Naive thymus-derived CD4-positive, alpha-beta T cell (primary cell): ENCODE measurements at regions of chr10 and their contacts with region 1.

Region 1: GRCh38 chr10:101214446-101215396 is 14.5 kb downstream of the LBX1 start:
- DNase-seq: peak; percentile 42 to 77 (median 67)
- ATAC-seq: peak; percentile 86
- H3K4me3 ChIP-seq: no peak overlapping the region
- H3K4me3 Mint-ChIP-seq: peak overlapping the region; percentile 48 to 90 (median 80)
- H3K27ac ChIP-seq: no peak overlapping the region
- H3K27ac Mint-ChIP-seq: peak overlapping the region in 2 of 9 donors; percentile 25 to 86
- H3K4me1 ChIP-seq: peaks cover 27 to 41% of the 10 kb centered on the region in 2 donors
- H3K4me1 Mint-ChIP-seq: peaks cover 12 to 48% (median 33%) of the 10 kb centered on the region in 7 donors
- H3K27me3 ChIP-seq: peaks cover 16 to 39% of the 10 kb centered on the region in 2 donors
- H3K27me3 Mint-ChIP-seq: peaks cover 67 to 94% (median 81%) of the 10 kb centered on the region in 5 donors

Region 2: DNA sequence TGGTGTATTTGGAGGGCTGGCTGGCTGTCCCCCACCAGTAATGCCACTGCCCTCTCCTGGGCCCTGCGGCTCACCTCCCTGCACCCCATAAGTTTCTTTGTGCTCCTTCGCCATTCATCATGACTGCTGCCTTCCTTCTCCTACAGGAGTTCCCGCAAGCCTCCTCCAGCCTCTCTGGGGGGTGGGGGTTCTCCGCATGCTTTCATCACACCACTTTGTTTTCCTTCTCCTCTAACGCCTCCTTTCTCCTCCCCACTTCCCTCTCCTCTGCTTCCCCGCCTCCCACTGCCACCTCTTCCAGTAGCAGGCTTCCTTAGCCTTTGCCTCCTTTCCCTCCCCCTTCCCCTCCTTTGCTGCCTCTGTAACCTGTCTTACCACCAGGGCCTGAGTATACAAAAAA is 411.2 kb before region 1 on chr10:
- CTCF ChIA-PET with region 1: no interaction called
- POLR2A ChIA-PET with region 1: no interaction called
- intact Hi-C with region 1: no loop called
- DNase-seq: no peak
- ATAC-seq: no peak
- H3K4me3 ChIP-seq: no peak overlapping the region
- H3K4me3 Mint-ChIP-seq: no peak overlapping the region
- H3K27ac ChIP-seq: no peak overlapping the region
- H3K27ac Mint-ChIP-seq: no peak overlapping the region
- H3K4me1 ChIP-seq: no peaks in the 10 kb centered on the region
- H3K4me1 Mint-ChIP-seq: no peaks in the 10 kb centered on the region
- H3K27me3 ChIP-seq: no peaks in the 10 kb centered on the region
- H3K27me3 Mint-ChIP-seq: peaks cover 49 to 86% (median 72%) of the 10 kb centered on the region in 5 donors

Region 3: DNA sequence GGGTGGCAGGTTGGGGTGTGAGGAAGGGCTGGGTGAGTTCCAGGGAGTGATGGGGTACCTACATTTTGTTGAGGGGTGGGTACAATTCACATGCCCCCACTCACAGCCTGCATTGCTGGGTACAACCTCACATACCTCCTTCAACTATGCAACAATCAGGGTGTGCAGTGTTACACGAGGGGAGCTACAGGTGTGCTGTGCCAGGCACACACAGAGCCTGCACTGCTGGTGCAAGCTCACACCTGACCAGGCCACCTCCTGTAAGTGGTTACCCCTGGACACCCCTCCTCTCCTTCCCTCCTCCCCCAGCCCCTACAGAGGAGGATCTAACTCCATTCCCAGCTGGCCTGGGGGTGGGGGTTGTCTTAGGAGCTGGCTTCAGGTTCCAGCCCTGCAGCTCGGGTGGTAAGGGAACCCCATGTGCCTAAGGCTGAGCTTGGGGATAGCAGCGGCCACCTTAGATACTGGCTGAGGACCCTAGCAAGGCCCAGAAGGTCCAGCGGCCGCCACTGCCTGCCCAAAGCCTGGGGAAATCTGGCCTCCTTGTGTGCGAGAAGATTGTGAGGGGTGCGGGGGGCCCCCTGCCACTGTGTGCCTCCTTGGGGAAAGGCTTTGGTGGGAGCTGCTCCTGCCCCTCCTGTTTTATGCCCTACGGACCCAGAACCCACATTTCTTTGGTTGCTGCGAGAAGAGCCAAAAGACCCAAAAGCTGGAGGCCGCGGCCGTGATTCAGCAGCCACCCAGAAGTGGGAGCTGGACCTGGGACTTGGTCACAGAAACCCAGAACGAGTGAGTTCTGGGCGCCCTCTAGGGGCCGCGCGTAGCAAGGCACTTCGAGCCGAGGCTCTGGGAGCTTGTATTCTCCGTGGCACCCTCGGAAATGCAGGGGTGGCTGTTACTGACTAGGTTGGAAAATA is 72.8 kb before region 1 on chr10:
- CTCF ChIA-PET with region 1: no interaction called
- POLR2A ChIA-PET with region 1: no interaction called
- intact Hi-C with region 1: loop called in 1 of 2 experiments (anchors 2 kb)
- DNase-seq: peak; percentile 57 to 85 (median 77)
- ATAC-seq: peak; percentile 93
- H3K4me3 ChIP-seq: no peak overlapping the region
- H3K4me3 Mint-ChIP-seq: peak overlapping the region in 5 of 10 donors; percentile 9 to 53 (median 18)
- H3K27ac ChIP-seq: no peak overlapping the region
- H3K27ac Mint-ChIP-seq: no peak overlapping the region
- H3K4me1 ChIP-seq: peaks cover 0 to 19% of the 10 kb centered on the region in 2 donors
- H3K4me1 Mint-ChIP-seq: peaks cover 10 to 38% (median 26%) of the 10 kb centered on the region in 7 donors
- H3K27me3 ChIP-seq: peaks cover 9 to 43% of the 10 kb centered on the region in 2 donors
- H3K27me3 Mint-ChIP-seq: peaks cover 74 to 97% (median 83%) of the 10 kb centered on the region in 5 donors

Region 4: DNA sequence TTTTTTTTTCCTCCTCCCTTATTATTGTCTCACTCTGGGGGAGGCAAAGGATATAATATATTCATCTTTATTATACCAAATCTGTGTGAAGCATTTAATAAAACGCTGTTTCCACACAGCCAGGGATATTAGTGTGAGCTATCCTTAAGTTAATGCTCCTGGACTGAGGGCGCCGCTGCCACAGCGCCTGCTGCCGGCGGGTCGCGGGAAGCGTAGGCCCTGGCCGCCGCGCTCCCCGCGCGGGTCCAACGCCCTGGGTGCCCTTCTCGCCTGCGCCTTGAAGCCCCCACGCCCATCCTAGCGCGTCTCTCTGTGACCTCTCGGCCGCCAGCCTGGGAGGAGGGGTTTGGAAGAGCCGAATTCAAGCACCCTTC is 24.0 kb after region 1 on chr10:
- CTCF ChIA-PET with region 1: interaction called, 19 read pairs
- POLR2A ChIA-PET with region 1: no interaction called
- intact Hi-C with region 1: loop called in 1 of 2 experiments (anchors 2 kb)
- DNase-seq: no peak
- ATAC-seq: peak; percentile 55
- H3K4me3 ChIP-seq: no peak overlapping the region
- H3K4me3 Mint-ChIP-seq: no peak overlapping the region
- H3K27ac ChIP-seq: no peak overlapping the region
- H3K27ac Mint-ChIP-seq: no peak overlapping the region
- H3K4me1 ChIP-seq: peaks cover 6 to 16% of the 10 kb centered on the region in 2 donors
- H3K4me1 Mint-ChIP-seq: peaks cover 9 to 24% (median 15%) of the 10 kb centered on the region in 7 donors
- H3K27me3 ChIP-seq: peaks cover 15 to 36% of the 10 kb centered on the region in 2 donors
- H3K27me3 Mint-ChIP-seq: peaks cover 74 to 80% (median 76%) of the 10 kb centered on the region in 5 donors

Region 5: GRCh38 chr10:101336382-101336781 is 121.7 kb after region 1 on chr10:
- CTCF ChIA-PET with region 1: no interaction called
- POLR2A ChIA-PET with region 1: no interaction called
- intact Hi-C with region 1: no loop called
- DNase-seq: no peak
- ATAC-seq: no peak
- H3K4me3 ChIP-seq: no peak overlapping the region
- H3K4me3 Mint-ChIP-seq: no peak overlapping the region
- H3K27ac ChIP-seq: no peak overlapping the region
- H3K27ac Mint-ChIP-seq: no peak overlapping the region
- H3K4me1 ChIP-seq: no peaks in the 10 kb centered on the region
- H3K4me1 Mint-ChIP-seq: no peaks in the 10 kb centered on the region
- H3K27me3 ChIP-seq: no peaks in the 10 kb centered on the region
- H3K27me3 Mint-ChIP-seq: peaks cover 0 to 27% (median 5%) of the 10 kb centered on the region in 5 donors

Region 6: GRCh38 chr10:101441541-101442455 is 227.1 kb after region 1 on chr10:
- CTCF ChIA-PET with region 1: interaction called, 17 read pairs
- POLR2A ChIA-PET with region 1: no interaction called
- intact Hi-C with region 1: loop called (anchors 1 to 2 kb)
- DNase-seq: peak in 6 of 9 donors; percentile 19 to 41 (median 34)
- ATAC-seq: peak; percentile 87
- H3K4me3 ChIP-seq: no peak overlapping the region
- H3K4me3 Mint-ChIP-seq: no peak overlapping the region
- H3K27ac ChIP-seq: no peak overlapping the region
- H3K27ac Mint-ChIP-seq: peak overlapping the region in 4 of 9 donors; percentile 5 to 43 (median 20)
- H3K4me1 ChIP-seq: no peaks in the 10 kb centered on the region
- H3K4me1 Mint-ChIP-seq: peaks cover 2 to 7% (median 5%) of the 10 kb centered on the region in 7 donors
- H3K27me3 ChIP-seq: no peaks in the 10 kb centered on the region
- H3K27me3 Mint-ChIP-seq: peaks cover 0 to 3% (median 0%) of the 10 kb centered on the region in 5 donors

Region 7: GRCh38 chr10:101569838-101570766 is 355.4 kb after region 1 on chr10:
- CTCF ChIA-PET with region 1: interaction called, 37 read pairs
- POLR2A ChIA-PET with region 1: interaction called, 3 read pairs
- intact Hi-C with region 1: loop called (anchors 1 kb)
- DNase-seq: peak; percentile 62 to 88 (median 77)
- ATAC-seq: peak; percentile 95
- H3K4me3 ChIP-seq: peak overlapping the region; percentile 69
- H3K4me3 Mint-ChIP-seq: peak overlapping the region; percentile 50 to 80 (median 74)
- H3K27ac ChIP-seq: no peak overlapping the region
- H3K27ac Mint-ChIP-seq: peak overlapping the region in 1 of 9 donors; percentile 43
- H3K4me1 ChIP-seq: peaks cover 4 to 17% of the 10 kb centered on the region in 2 donors
- H3K4me1 Mint-ChIP-seq: peaks cover 0 to 21% (median 13%) of the 10 kb centered on the region in 7 donors
- H3K27me3 ChIP-seq: peaks cover 0 to 10% of the 10 kb centered on the region in 2 donors
- H3K27me3 Mint-ChIP-seq: peaks cover 31 to 47% (median 45%) of the 10 kb centered on the region in 5 donors

Region 8: DNA sequence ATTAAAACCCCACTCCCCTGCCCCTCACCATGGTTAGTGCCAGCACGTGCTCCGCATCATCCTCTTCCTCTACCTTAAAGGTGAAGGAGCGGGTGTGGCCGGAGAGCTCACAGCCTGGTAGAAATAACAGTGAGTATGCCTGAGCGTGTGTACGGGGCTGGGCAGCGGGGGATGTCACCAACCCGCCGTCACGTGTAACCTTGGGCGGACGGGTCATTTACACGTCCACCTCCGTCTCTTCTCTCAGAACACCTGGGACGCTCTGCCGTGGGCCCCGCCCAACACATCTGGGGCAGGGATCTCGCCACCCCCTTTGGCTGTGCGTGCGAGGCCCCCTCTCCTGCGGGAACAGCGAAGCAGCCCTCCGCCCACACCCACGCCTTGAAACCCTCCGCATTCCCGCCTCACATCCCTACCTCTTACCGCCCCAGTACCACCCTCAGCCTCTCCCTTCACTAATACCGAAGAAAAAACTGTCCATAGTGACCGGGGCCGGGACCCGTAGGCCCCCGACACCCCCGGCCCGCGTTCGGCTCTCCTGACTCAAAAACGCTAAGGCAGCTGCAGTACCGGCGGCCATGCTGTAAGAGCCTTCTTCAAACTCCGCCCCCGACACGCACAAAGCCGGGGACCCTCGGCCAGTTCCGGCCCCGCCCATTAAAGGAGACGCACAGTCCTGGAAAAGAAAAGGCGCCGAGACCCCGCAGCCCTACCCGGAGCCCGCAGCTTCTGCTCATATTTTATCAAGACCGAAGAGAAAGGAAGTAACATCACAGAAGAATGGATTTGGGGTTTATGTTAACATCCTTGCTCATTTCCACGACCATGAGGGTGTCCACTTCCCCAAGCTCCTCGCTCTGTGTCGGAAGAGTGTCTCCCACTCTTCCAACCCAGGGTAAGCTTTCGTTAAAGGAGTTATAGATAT is 568.4 kb after region 1 on chr10 and contains the start of gene NPM3:
- CTCF ChIA-PET with region 1: interaction called, 5 read pairs
- POLR2A ChIA-PET with region 1: no interaction called
- intact Hi-C with region 1: loop called (anchors 1 kb)
- DNase-seq: peak in 8 of 9 donors; percentile 68 to 84 (median 77)
- ATAC-seq: peak; percentile 82
- H3K4me3 ChIP-seq: peak within 1 kb of the TSS; percentile 68
- H3K4me3 Mint-ChIP-seq: peak within 1 kb of the TSS; percentile 92 to 100 (median 99)
- H3K27ac ChIP-seq: peak within 1 kb of the TSS; percentile 81
- H3K27ac Mint-ChIP-seq: peak within 1 kb of the TSS; percentile 65 to 98 (median 96)
- H3K4me1 ChIP-seq: peaks cover 32 to 49% of the 10 kb centered on the region in 2 donors
- H3K4me1 Mint-ChIP-seq: peaks cover 36 to 76% (median 61%) of the 10 kb centered on the region in 7 donors
- H3K27me3 ChIP-seq: peaks cover 0 to 11% of the 10 kb centered on the region in 2 donors
- H3K27me3 Mint-ChIP-seq: peaks cover 8 to 17% (median 10%) of the 10 kb centered on the region in 5 donors
- total RNA-seq, gene NPM3: 10.9 to 31.3 (median 16.2) TPM

Region 9: GRCh38 chr10:102072673-102073527 is 858.2 kb after region 1 on chr10:
- CTCF ChIA-PET with region 1: no interaction called
- POLR2A ChIA-PET with region 1: no interaction called
- intact Hi-C with region 1: loop called in 1 of 2 experiments (anchors 2 kb)
- DNase-seq: peak; percentile 54 to 81 (median 73)
- ATAC-seq: peak; percentile 94
- H3K4me3 ChIP-seq: no peak overlapping the region
- H3K4me3 Mint-ChIP-seq: no peak overlapping the region
- H3K27ac ChIP-seq: no peak overlapping the region
- H3K27ac Mint-ChIP-seq: peak overlapping the region in 1 of 9 donors; percentile 13
- H3K4me1 ChIP-seq: no peaks in the 10 kb centered on the region
- H3K4me1 Mint-ChIP-seq: peaks cover 0 to 17% (median 13%) of the 10 kb centered on the region in 7 donors
- H3K27me3 ChIP-seq: no peaks in the 10 kb centered on the region
- H3K27me3 Mint-ChIP-seq: no peaks in the 10 kb centered on the region